K562 (cell line): ENCODE measurements at regions of chr20 and their contacts with region 1.

Region 1: DNA sequence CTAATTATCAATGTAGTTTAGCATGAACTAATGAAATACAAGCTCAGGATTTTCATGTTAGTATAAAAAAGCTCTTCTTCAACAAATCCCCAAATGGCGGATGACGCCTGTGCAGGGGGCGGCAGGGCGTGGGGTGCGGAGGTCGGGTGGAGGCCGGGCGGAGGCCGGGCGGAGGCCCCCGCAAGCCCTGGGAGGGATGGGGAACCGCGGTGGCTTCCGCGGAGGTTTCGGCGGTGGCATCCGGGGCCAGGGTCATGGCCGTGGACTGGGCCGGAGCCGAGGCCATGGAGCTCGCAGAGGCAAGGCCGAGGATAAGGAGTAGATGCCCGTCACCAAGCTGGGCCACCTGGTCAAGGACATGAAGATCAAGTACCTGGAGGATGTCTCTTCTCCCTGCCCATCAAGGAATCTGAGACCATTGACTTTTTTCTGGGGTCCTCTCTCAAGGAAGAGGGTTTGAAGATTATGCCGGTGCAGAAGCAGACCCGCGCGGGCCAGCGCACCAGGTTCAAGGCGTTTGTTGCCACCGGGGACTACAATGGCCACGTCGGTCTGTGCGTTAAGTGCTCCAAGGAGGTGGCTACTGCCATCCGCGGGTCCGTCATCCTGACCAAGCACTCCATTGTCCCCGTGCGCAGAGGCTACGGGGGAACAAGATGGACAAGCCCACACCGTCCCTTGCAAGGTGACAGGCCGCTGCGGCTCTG is 10.4 kb upstream of the EIF2S2 start:
- DNase-seq: no peak
- ATAC-seq: no peak
- H3K4me3 ChIP-seq: no peak overlapping the region
- H3K27ac ChIP-seq: no peak overlapping the region
- H3K4me1 ChIP-seq: peaks cover 0 to 8% of the 10 kb centered on the region in 2 experiments; a peak in 3 of 5 replicates
- H3K27me3 ChIP-seq: no peaks in the 10 kb centered on the region
- CTCF ChIP-seq: no peak
- EP300 ChIP-seq: no peak
- POLR2A ChIP-seq: no peak
- RAD21 ChIP-seq: no peak

Region 2: DNA sequence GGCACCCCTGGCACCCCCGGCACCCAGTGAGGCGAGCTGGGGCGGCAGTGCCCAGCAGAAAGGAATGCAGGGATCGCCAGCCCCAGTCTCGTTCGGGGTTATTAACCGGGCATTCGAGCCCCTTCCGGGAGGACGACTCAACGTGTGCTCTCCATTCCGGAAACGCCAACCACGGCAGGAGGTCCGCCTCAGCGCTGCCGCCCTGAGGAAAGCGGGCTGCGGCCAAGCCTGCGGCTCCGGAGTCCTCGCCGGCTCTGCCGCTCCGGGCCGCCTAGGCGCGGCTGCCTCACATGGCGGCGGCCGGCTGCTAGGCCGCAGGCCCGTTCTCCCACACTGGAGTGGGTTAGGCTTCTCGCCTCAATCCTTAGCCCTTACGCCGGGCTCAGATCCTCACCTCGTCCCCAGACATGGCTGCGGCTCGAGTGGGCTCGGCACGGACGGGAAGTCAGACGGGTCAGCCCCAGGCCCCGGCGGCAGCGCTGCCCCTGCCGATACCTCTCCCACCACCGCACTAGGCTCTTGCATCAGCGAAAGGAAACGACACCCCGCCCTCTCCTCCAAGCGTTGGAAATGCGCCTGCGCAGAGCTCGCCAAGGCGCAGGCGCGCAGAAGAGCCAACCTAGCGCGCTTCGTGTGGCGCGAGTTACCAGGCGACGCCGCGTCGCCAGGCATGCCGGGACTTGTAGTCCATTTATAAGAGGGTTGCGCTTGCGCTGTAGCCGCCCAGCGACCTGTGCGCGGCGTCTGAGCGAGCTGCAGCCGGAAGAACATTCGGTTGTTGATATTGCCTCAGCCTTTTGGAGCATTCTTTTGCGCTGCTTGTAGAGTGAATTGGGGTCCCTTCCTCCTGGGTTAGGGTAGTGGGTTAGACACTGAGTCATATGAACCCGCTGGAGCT is 10.5 kb before region 1 on chr20 and contains the start of gene EIF2S2:
- CTCF ChIA-PET with region 1: no interaction called
- POLR2A ChIA-PET with region 1: interaction called, 15 read pairs
- in situ Hi-C with region 1: no loop called
- intact Hi-C with region 1: no loop called
- DNase-seq: peak; percentile 92 to 100 (median 94)
- ATAC-seq: peak; percentile 91
- H3K4me3 ChIP-seq: peak within 1 kb of the TSS; percentile 99
- H3K27ac ChIP-seq: peak within 1 kb of the TSS; percentile 99
- H3K4me1 ChIP-seq: peaks cover 18 to 21% of the 10 kb centered on the region in 2 experiments; a peak in 4 of 5 replicates
- H3K27me3 ChIP-seq: no peaks in the 10 kb centered on the region
- CTCF ChIP-seq: no peak
- EP300 ChIP-seq: peak; percentile 16; the same call in 1 of the 2 replicates
- POLR2A ChIP-seq: peak; percentile 98
- RAD21 ChIP-seq: no peak
- polyA plus RNA-seq, gene EIF2S2: 79.7 to 92.3 TPM